ENCODE measurements at regions of chrX and their contacts with region 1.

Region 1: DNA sequence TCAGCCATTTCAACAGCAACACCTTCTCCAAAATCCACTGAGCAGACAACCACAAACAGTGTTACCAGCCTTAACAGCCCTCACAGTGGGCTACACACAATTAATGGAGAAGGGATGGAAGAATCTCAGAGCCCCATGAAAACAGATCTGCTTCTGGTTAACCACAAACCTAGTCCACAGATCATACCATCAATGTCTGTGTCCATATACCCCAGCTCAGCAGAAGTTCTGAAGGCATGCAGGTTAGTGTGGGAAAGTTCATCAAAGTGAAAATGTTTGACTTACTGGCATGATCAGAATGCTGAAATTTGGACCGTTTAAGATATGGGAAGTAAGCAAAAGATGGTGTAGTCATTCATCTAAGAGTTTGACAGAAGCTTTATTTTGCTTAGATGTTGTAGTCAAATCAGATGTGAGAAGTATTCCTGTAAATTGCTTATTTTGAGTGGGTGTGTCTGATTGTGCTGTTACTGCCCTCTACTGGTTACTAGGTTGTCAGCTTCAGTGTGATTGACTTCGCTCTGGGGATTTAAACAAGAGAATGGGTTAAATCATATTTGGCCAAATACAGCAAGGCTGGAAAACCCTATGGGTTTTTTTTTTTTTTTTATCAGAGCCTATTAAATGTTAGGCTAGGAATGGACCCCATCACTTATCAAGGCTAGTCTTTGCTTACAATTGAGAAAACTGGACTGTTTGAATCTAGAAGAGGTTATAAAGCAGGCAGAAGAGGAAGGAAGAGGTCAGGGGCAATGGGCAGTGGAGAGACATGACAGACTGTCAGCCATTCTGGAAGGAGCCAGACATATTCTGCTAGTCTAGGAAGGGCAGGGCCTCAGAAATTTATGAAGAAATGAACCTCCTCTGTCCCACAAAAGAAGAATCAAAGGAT is 130.3 kb downstream of the DIPK2B start:
- ATAC-seq: peak in 3 of 8 experiments; percentile 55 to 67 (median 58)
- H3K4me3 ChIP-seq: no peak overlapping the region
- H3K27ac ChIP-seq: no peak overlapping the region
- H3K4me1 ChIP-seq: no peaks in the 10 kb centered on the region

Region 2: GRCh38 chrX:44874420-44875184 is 195.8 kb before region 1 on chrX:
- in situ Hi-C with region 1: loop called in 1 of 9 experiments (anchors 25 kb)
- ATAC-seq: no peak
- H3K4me3 ChIP-seq: peak overlapping the region; percentile 67 to 91 (median 82)
- H3K27ac ChIP-seq: peak overlapping the region; percentile 91 to 98
- H3K4me1 ChIP-seq: no peaks in the 10 kb centered on the region

Region 3: GRCh38 chrX:45258731-45259402 is 188.5 kb after region 1 on chrX:
- in situ Hi-C with region 1: no loop called
- ATAC-seq: no peak
- H3K4me3 ChIP-seq: no peak overlapping the region
- H3K27ac ChIP-seq: no peak overlapping the region
- H3K4me1 ChIP-seq: no peaks in the 10 kb centered on the region

Region 4: DNA sequence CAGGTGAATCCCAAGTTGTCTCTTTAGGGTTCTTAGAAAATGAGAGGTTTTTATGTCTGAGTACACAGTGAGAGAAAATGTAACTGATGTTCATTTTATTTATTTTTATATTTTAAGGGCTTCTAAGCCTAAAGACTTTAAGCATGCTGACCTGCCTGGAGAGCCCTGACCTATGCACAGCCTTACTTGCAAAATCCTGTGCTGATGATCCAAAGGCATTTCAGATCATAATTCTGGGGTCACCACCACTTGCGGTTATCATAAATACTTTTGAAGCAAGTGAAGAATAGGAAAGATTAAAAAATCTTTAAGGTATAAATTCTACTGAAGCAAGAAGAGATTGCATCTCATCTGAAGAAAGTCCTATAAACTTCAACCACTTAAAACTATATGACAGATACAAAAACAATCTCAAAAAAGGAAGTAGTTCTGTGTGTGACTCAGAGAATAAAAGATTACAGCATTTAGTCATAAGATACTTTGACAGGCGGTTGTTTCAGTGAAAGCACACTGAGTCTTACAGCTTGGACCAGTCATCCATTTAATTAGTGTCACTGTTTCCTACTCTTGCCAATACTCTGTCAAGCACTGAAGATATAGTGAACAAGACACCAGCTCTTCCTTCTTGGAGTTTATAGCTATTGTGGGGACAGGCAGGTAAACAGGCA is 375.5 kb after region 1 on chrX:
- in situ Hi-C with region 1: no loop called
- ATAC-seq: peak in 3 of 8 experiments; percentile 22 to 51 (median 41)
- H3K4me3 ChIP-seq: no peak overlapping the region
- H3K27ac ChIP-seq: no peak overlapping the region
- H3K4me1 ChIP-seq: no peaks in the 10 kb centered on the region

Measured in motor neuron (in vitro differentiated cells).